Naive thymus-derived CD8-positive, alpha-beta T cell (primary cell): ENCODE measurements at regions of chr22 and their contacts with region 1.

Region 1: GRCh38 chr22:30356449-30357235 is at the starts of genes CCDC157 and SF3A1:
- DNase-seq: peak; percentile 79 to 91 (median 86)
- ATAC-seq: peak; percentile 85 to 86
- H3K4me3 Mint-ChIP-seq: peak within 1 kb of the TSS; percentile 91 to 98 (median 96)
- H3K27ac Mint-ChIP-seq: peak within 1 kb of the TSS; percentile 93 to 99 (median 96)
- H3K4me1 Mint-ChIP-seq: peaks cover 25 to 63% (median 58%) of the 10 kb centered on the region in 4 donors
- H3K27me3 Mint-ChIP-seq: no peaks in the 10 kb centered on the region
- polyA plus RNA-seq, gene CCDC157: 0.66 to 2.5 (median 1.1) TPM
- polyA plus RNA-seq, gene SF3A1: 66.5 to 119 (median 99.8) TPM

Region 2: DNA sequence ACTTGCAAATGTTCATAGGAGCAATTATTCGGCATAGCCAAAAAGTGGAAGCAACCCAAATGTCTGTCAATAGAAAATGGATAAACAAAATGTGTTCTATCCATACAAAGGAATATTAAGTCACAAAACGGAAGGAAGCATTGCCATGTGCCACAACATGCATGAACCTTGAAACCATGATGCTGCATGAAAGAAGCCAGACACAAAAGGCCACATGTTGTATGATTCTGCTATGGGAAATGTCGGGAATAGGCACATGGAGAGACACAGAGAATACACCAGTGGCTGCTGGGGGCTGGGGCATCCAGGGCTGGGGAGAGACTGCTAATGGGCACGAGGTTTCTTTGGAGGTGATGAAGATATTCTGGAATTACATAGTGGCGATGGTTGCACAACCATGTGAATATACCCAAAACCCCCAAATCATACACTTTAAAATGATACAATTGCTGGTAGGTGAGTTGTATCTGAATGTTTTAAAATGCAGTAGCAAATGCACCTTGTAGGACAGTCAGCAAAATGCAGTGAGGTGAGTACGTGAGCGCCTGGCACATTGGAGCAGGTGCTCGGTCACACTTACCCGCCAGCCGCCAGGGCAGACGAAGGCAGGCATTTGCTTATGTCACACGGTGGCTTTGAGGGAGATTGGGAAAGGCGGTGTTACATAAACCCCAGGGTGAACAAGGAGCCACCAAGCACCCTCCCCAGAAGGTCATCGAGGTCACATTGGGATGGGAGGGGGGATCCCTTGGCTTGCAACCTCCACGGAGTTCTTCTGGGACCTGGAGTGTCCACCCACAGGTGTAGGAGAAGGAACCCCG is 83.7 kb before region 1 on chr22:
- POLR2A ChIA-PET with region 1: no interaction called
- DNase-seq: no peak
- ATAC-seq: no peak
- H3K4me3 Mint-ChIP-seq: no peak overlapping the region
- H3K27ac Mint-ChIP-seq: peak overlapping the region; percentile 53 to 88 (median 71)
- H3K4me1 Mint-ChIP-seq: peaks cover 31 to 65% (median 59%) of the 10 kb centered on the region in 4 donors
- H3K27me3 Mint-ChIP-seq: peaks cover 0 to 2% (median 0%) of the 10 kb centered on the region in 5 donors

Region 3: GRCh38 chr22:30297991-30298719 is 58.5 kb before region 1 on chr22:
- POLR2A ChIA-PET with region 1: interaction called, 10 read pairs
- DNase-seq: no peak
- ATAC-seq: no peak
- H3K4me3 Mint-ChIP-seq: peak overlapping the region in 9 of 10 donors; percentile 3 to 82 (median 74)
- H3K27ac Mint-ChIP-seq: peak overlapping the region; percentile 92 to 100 (median 97)
- H3K4me1 Mint-ChIP-seq: peaks cover 53 to 99% (median 80%) of the 10 kb centered on the region in 4 donors
- H3K27me3 Mint-ChIP-seq: no peaks in the 10 kb centered on the region

Region 4: DNA sequence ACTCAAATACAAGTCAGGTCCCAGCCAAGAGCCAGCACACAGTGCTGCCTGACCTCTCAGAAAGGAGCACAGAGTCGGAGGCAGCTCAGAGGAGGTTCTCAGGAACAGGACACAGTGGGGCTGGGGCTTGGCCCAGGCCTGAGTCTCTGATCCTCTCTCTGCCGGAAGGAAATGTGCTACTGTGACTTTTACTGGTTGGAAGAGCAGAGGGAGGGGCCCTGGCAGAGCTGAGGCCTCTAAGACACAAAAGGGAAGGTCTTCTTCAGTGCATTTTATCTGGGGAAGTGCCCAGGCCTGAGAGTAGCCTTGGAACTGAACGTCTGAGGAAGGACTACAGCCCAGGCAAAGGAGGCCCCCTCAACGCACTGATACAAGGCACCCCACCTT is 51.1 kb before region 1 on chr22:
- POLR2A ChIA-PET with region 1: interaction called, 65 read pairs
- DNase-seq: peak in 9 of 10 donors; percentile 37 to 73 (median 55)
- ATAC-seq: peak; percentile 43 to 55
- H3K4me3 Mint-ChIP-seq: peak overlapping the region; percentile 63 to 85 (median 74)
- H3K27ac Mint-ChIP-seq: peak overlapping the region; percentile 94 to 100 (median 98)
- H3K4me1 Mint-ChIP-seq: peaks cover 68 to 99% (median 99%) of the 10 kb centered on the region in 4 donors
- H3K27me3 Mint-ChIP-seq: no peaks in the 10 kb centered on the region

Region 5: DNA sequence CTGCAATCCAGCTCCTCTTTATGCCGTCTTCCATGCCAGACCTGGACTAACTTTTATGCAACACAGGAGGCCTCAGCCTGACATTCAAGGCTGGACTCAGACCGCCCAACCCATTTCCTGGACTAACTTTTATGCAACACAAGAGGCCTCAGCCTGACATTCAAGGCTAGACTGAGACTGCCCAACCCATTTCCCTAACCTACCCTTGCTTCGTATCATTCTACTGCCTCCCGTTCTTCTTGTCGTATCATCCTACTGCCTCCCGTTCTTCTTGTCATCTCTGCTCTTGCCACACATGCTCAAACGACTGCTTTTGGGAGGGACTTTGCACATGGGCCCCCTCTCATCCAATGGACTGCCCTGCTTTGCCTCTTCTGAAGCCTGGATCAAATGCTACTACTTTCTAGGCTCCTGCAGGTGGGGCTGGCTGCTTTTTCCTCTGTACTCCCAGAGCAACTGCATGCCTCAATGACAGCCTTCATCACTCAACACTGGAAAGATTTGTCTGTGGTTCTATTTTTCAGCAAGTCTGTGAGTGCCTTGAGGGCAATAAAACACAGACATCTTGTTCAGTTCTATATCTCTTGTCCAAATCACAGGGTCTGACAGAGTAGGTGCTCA is 37.7 kb before region 1 on chr22:
- POLR2A ChIA-PET with region 1: interaction called, 10 read pairs
- DNase-seq: no peak
- ATAC-seq: peak; percentile 22 to 39
- H3K4me3 Mint-ChIP-seq: peak overlapping the region in 9 of 10 donors; percentile 31 to 78 (median 66)
- H3K27ac Mint-ChIP-seq: peak overlapping the region; percentile 72 to 100 (median 90)
- H3K4me1 Mint-ChIP-seq: peaks cover 63 to 99% (median 95%) of the 10 kb centered on the region in 4 donors
- H3K27me3 Mint-ChIP-seq: no peaks in the 10 kb centered on the region

Region 6: GRCh38 chr22:30326706-30327362 is 29.8 kb before region 1 on chr22 and contains the start of gene TBC1D10A:
- POLR2A ChIA-PET with region 1: interaction called, 39 read pairs
- DNase-seq: peak; percentile 85 to 98 (median 93)
- ATAC-seq: peak; percentile 87
- H3K4me3 Mint-ChIP-seq: peak within 1 kb of the TSS; percentile 89 to 98 (median 92)
- H3K27ac Mint-ChIP-seq: peak within 1 kb of the TSS; percentile 86 to 98 (median 94)
- H3K4me1 Mint-ChIP-seq: peaks cover 31 to 54% (median 48%) of the 10 kb centered on the region in 4 donors
- H3K27me3 Mint-ChIP-seq: no peaks in the 10 kb centered on the region
- polyA plus RNA-seq, gene TBC1D10A: 56.7 to 83.4 (median 62.0) TPM

Region 7: DNA sequence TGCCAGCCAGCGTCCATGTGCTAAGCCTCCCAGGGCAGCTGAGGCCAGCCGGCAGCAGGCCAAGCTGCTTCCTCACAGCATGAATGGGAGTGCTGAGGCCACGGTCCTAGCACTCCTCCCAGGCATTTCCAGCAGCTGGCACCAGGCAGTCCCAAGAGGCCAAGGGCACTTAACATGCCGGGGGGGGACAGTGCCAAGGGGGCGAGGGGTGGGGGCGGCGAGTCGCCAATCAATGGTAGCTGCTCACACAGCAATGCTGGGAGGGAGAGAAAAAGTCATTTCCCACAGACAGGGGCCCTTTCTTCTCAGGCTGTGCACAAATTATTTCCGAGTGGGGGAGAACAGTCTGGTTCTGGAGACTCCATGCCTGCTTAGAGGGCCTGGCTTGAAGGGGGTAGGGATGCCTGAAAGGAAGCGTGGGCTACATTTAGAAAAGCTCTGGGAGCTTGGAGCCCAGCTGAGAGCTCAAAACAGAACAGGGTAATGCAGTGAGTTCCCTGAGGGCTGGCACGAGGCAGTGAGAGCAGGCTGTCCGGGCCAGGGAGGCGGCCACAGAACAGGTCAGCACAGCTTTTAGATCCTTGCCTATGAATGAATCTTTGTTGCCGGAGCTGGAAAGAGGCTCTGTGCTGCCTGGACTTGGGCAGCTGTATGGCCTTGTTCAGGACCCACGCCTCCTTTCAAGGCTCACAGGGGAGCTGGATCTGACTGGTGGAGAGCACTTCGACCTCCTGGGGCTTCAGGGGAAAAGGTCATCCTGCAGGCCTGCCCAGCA is 15.5 kb before region 1 on chr22:
- POLR2A ChIA-PET with region 1: interaction called, 12 read pairs
- DNase-seq: no peak
- ATAC-seq: no peak
- H3K4me3 Mint-ChIP-seq: no peak overlapping the region
- H3K27ac Mint-ChIP-seq: peak overlapping the region in 3 of 10 donors; percentile 36 to 91 (median 80)
- H3K4me1 Mint-ChIP-seq: peaks cover 0 to 10% (median 3%) of the 10 kb centered on the region in 4 donors
- H3K27me3 Mint-ChIP-seq: no peaks in the 10 kb centered on the region

Region 8: DNA sequence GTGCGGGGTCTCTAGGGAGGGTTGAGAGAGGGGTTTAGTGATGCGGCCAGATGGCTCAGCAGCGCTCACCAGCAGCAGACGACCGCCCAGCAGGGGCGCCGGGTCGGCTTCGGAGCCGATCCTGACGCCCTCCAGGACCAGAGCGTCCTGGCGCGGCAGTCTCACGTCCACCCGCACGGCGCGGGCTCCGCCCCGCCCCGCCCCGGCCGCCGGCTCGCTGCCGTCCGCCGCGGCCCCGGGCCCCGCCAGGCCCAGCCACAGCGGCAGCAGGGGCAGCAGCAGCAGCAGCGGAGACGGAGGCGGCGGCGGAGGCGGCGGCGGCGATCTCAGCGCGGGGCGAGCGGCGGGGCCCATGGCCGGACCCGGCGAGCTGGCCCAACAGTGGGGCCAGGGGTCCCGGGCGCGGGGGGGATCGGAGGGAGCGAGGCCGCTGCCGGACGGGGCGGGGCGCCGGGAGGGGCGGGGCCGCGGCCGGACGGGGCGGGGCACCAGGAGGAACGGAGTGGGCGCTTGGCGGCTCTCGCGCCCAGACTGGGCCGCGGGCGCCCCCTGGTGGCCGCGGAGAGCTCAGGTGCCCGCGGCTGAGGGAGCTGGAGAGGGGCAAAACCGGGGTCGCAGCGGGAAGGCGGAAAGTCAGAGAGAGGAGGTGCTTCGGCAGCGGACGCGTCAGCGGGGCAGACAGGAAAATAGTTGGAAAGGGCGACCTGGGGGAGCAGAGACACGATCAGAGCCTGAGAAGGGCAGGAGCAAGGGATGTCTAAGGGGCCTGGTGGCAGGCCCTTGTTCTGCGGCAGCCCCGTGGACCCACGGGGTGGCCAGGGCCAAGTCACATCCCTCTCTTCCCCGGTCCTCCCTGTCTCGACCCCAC is 30.6 kb after region 1 on chr22 and contains the start of gene RNF215:
- POLR2A ChIA-PET with region 1: interaction called, 13 read pairs
- DNase-seq: peak; percentile 61 to 90 (median 81)
- ATAC-seq: peak; percentile 78
- H3K4me3 Mint-ChIP-seq: peak within 1 kb of the TSS; percentile 61 to 91 (median 80)
- H3K27ac Mint-ChIP-seq: peak within 1 kb of the TSS in 8 of 10 donors; percentile 55 to 93 (median 84)
- H3K4me1 Mint-ChIP-seq: peaks cover 14 to 27% (median 24%) of the 10 kb centered on the region in 4 donors
- H3K27me3 Mint-ChIP-seq: no peaks in the 10 kb centered on the region
- polyA plus RNA-seq, gene RNF215: 0.14 to 0.44 (median 0.39) TPM